Vagina (tissue), 2 donors: ENCODE measurements at regions of chr21 and their contacts with region 1.

Region 1: GRCh38 chr21:33542640-33543504 is at the start of gene SON:
- DNase-seq: peak; percentile 99 to 100
- H3K4me3 ChIP-seq: peak within 1 kb of the TSS; percentile 73 to 74
- H3K27ac ChIP-seq: peak within 1 kb of the TSS; percentile 97
- H3K4me1 ChIP-seq: peaks cover 32% of the 10 kb centered on the region
- H3K27me3 ChIP-seq: no peaks in the 10 kb centered on the region
- CTCF ChIP-seq: no peak
- POLR2A ChIP-seq: peak; percentile 11 to 75
- total RNA-seq, gene SON: 212 TPM

Region 2: GRCh38 chr21:33479679-33480480 is 63.0 kb before region 1 on chr21 and contains the start of gene TMEM50B:
- intact Hi-C with region 1: loop called (anchors 1 kb)
- DNase-seq: peak in 1 of 2 donors; percentile 97
- H3K4me3 ChIP-seq: peak within 1 kb of the TSS; percentile 66 to 87
- H3K27ac ChIP-seq: peak within 1 kb of the TSS; percentile 88
- H3K4me1 ChIP-seq: peaks cover 22% of the 10 kb centered on the region
- H3K27me3 ChIP-seq: no peaks in the 10 kb centered on the region
- CTCF ChIP-seq: peak in 2 of 3 experiments; percentile 30 to 31
- POLR2A ChIP-seq: peak; percentile 85 to 96
- total RNA-seq, gene TMEM50B: 42.5 TPM